ENCODE measurements at regions of chr2 and their contacts with region 1.

Region 1: GRCh38 chr2:64144057-64145013 is at the start of gene PELI1:
- DNase-seq: peak; percentile 94 to 96
- ATAC-seq: peak; percentile 98 to 100 (median 99)
- H3K4me3 ChIP-seq: peak within 1 kb of the TSS; percentile 78 to 99 (median 95)
- H3K27ac ChIP-seq: peak within 1 kb of the TSS; percentile 96 to 99 (median 98)
- H3K4me1 ChIP-seq: peaks cover 0 to 39% (median 18%) of the 10 kb centered on the region in 9 donors
- H3K27me3 ChIP-seq: no peaks in the 10 kb centered on the region
- CTCF ChIP-seq: peak in 7 of 9 donors; percentile 9 to 56 (median 42)
- total RNA-seq, gene PELI1: 6.3 to 15.6 (median 8.6) TPM

Region 2: DNA sequence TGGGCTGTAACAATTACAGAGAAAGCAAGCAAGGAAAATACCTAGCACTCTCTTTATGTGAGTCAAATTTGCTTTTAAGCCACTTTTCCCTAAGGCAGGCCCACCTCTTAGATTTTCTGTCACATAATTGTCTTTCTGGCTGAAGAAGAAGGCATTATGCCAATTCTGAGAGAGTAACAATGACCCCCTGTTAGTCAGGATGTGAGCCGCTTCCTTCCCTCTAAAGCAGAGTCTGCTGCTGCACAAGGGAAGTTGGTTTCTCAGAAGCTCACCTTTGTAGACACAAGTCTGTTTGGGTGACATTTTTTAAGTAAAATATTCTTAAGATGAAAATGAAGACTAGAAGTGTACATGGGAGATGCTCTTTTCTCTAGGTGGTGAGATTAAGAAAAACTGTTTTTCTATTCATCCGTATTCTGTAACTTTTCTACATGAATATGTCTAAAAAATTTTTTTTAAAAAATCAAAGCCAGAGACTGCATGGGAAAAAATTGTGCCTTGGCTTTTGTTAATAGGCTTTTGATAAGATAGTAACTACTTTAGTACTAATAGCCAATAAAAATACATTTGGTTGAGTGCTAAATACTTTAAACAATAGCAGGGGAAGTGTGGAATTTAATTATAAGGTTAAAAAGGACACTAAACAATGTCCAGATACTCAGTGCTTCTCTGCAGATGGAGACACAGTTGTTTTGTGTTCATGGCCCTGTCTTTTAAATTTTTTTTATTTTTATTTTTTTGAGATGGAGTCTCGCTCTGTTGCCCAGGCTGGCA is 91.7 kb before region 1 on chr2:
- intact Hi-C with region 1: loop called in 6 of 10 experiments (anchors 5 to 10 kb)
- DNase-seq: peak in 1 of 2 donors; percentile 45
- ATAC-seq: peak; percentile 72 to 94 (median 81)
- H3K4me3 ChIP-seq: no peak overlapping the region
- H3K27ac ChIP-seq: peak overlapping the region; percentile 38 to 86 (median 70)
- H3K4me1 ChIP-seq: peaks cover 0 to 40% (median 15%) of the 10 kb centered on the region in 9 donors
- H3K27me3 ChIP-seq: no peaks in the 10 kb centered on the region
- CTCF ChIP-seq: no peak

Region 3: GRCh38 chr2:64203858-64204632 is 59.7 kb after region 1 on chr2:
- intact Hi-C with region 1: loop called in 1 of 10 experiments (anchors 5 kb)
- DNase-seq: peak; percentile 30 to 40
- ATAC-seq: peak in 7 of 8 donors; percentile 55 to 74 (median 68)
- H3K4me3 ChIP-seq: peak overlapping the region in 6 of 10 donors; percentile 11 to 37 (median 26)
- H3K27ac ChIP-seq: peak overlapping the region; percentile 48 to 89 (median 78)
- H3K4me1 ChIP-seq: peaks cover 2 to 57% (median 40%) of the 10 kb centered on the region in 9 donors
- H3K27me3 ChIP-seq: no peaks in the 10 kb centered on the region
- CTCF ChIP-seq: no peak

Region 4: DNA sequence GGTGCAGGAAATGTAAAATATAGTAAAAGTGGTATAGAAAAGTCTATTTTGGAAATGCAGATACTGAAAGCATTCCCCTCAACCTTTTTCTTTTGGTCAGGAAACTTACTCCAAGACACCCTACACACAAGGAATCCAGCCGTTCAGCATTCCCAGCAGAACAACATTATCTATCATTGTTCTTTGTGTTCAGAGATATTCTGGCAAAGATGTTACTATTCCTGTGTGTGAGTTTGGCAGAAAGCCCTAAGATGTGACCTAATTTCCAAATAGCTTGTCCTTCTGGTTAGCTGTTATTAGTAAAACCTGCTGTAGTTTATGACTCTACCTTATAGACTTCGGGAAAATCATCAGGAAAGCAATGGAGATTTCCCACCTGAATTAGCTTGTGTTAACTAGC is 78.0 kb after region 1 on chr2:
- intact Hi-C with region 1: loop called in 2 of 10 experiments (anchors 5 kb)
- DNase-seq: peak in 1 of 2 donors; percentile 53
- ATAC-seq: peak; percentile 64 to 89 (median 86)
- H3K4me3 ChIP-seq: no peak overlapping the region
- H3K27ac ChIP-seq: peak overlapping the region in 6 of 10 donors; percentile 4 to 80 (median 44)
- H3K4me1 ChIP-seq: peaks cover 2 to 62% (median 29%) of the 10 kb centered on the region in 9 donors
- H3K27me3 ChIP-seq: no peaks in the 10 kb centered on the region
- CTCF ChIP-seq: no peak

Region 5: GRCh38 chr2:64273524-64274398 is 129.4 kb after region 1 on chr2:
- intact Hi-C with region 1: loop called in 1 of 10 experiments (anchors 10 kb)
- DNase-seq: peak in 1 of 2 donors; percentile 40
- ATAC-seq: peak; percentile 83 to 94 (median 90)
- H3K4me3 ChIP-seq: peak overlapping the region in 4 of 10 donors; percentile 2 to 19 (median 14)
- H3K27ac ChIP-seq: peak overlapping the region; percentile 22 to 89 (median 74)
- H3K4me1 ChIP-seq: peaks cover 6 to 50% (median 28%) of the 10 kb centered on the region in 9 donors
- H3K27me3 ChIP-seq: no peaks in the 10 kb centered on the region
- CTCF ChIP-seq: no peak

Measured in heart right ventricle (tissue), 16 donors.